Activated B cell treated with CpG ODN at 0.5 μM for 24 hours (primary cell): ENCODE measurements at regions of chr10 and their contacts with region 1.

Region 1: DNA sequence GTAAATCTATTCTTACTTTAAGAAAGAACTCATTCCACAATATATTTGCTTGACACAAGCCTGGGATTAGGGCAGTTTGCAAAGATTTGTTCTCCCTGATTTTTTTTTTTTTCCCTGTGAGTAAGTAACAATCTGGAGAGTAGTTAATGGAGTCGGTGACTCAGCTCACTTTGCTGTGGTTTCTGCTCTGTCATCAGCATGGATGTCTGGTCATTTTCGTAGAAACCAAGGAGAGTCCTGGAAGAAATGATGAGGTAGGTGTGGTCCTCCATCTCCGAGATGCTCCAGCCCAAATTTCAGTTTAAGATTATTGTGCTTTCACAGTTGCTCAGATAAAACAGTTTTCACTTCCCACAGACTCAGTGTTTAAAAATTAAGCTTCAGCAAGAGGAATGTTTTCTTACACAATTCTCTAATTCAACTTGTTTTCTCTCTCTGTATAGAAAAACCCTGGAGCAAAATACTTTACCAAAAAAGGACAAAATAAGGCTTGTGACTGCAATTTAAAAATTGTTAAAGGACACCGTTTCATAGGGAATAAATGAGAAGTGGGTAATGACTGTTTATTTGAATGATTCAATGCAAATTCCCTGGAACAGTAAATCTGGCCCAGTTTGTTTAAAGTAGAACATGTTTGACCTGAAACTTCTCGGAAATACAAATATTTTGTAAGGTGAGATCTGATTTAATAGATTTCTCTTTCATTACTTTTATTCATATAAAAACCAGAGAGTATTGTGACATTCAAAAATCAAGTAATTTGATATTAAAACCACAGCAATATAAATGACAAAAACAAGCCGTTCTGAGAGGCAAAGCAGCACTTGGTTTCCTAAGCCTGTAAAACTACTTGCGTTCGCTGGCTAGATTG is 76.5 kb upstream of the PITRM1 start:
- DNase-seq: no peak
- ATAC-seq: no peak
- H3K4me3 Mint-ChIP-seq: no peak overlapping the region
- H3K27ac Mint-ChIP-seq: no peak overlapping the region
- H3K4me1 Mint-ChIP-seq: no peaks in the 10 kb centered on the region
- H3K27me3 Mint-ChIP-seq: peaks cover 17% of the 10 kb centered on the region
- CTCF ChIP-seq: no peak

Region 2: GRCh38 chr10:3172446-3173170 is 76.5 kb before region 1 on chr10 and contains the start of gene PITRM1:
- CTCF ChIA-PET with region 1: no interaction called
- POLR2A ChIA-PET with region 1: interaction called, 10 read pairs
- intact Hi-C with region 1: no loop called
- DNase-seq: peak; percentile 96
- ATAC-seq: peak; percentile 92
- H3K4me3 Mint-ChIP-seq: peak within 1 kb of the TSS; percentile 85
- H3K27ac Mint-ChIP-seq: peak within 1 kb of the TSS; percentile 91
- H3K4me1 Mint-ChIP-seq: peaks cover 23% of the 10 kb centered on the region
- H3K27me3 Mint-ChIP-seq: no peaks in the 10 kb centered on the region
- CTCF ChIP-seq: no peak
- total RNA-seq, gene PITRM1: 59.6 and 60.7 TPM in 2 replicates

Region 3: DNA sequence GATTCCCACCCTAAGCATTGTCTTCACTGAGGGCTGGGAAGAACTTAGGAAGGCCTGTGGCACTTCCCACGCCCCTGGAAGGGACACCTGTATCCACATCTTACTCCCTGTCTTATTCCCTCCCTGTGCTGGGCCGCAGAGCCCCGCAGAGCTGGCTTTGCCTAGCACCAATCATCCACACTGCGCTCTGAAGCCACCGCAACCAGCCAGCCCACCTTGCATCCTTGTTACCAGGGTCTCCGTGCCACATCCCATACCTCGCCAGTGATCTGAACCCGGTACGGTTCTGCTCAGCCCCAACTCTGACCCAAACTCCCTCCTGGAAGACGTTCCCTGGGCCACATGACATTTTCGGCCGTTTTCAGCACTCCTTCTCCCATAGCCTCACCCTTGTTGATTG is 24.8 kb after region 1 on chr10:
- CTCF ChIA-PET with region 1: no interaction called
- POLR2A ChIA-PET with region 1: interaction called, 13 read pairs
- intact Hi-C with region 1: no loop called
- DNase-seq: no peak
- ATAC-seq: no peak
- H3K4me3 Mint-ChIP-seq: no peak overlapping the region
- H3K27ac Mint-ChIP-seq: no peak overlapping the region
- H3K4me1 Mint-ChIP-seq: no peaks in the 10 kb centered on the region
- H3K27me3 Mint-ChIP-seq: peaks cover 10% of the 10 kb centered on the region
- CTCF ChIP-seq: no peak

Region 4: GRCh38 chr10:3293581-3294431 is 44.7 kb after region 1 on chr10:
- CTCF ChIA-PET with region 1: no interaction called
- POLR2A ChIA-PET with region 1: no interaction called
- intact Hi-C with region 1: no loop called
- DNase-seq: no peak
- ATAC-seq: no peak
- H3K4me3 Mint-ChIP-seq: no peak overlapping the region
- H3K27ac Mint-ChIP-seq: no peak overlapping the region
- H3K4me1 Mint-ChIP-seq: no peaks in the 10 kb centered on the region
- H3K27me3 Mint-ChIP-seq: no peaks in the 10 kb centered on the region
- CTCF ChIP-seq: no peak